Caco-2 (cell line): ENCODE measurements at regions of chr5 and their contacts with region 1.

Region 1: GRCh38 chr5:89407054-89407453 is 524.1 kb upstream of the MEF2C start:
- DNase-seq: no peak
- H3K4me3 ChIP-seq: no peak overlapping the region
- H3K4me3 Mint-ChIP-seq: no peak overlapping the region
- H3K27ac Mint-ChIP-seq: no peak overlapping the region
- H3K4me1 ChIP-seq: no peaks in the 10 kb centered on the region
- H3K4me1 Mint-ChIP-seq: no peaks in the 10 kb centered on the region
- H3K27me3 ChIP-seq: no peaks in the 10 kb centered on the region
- H3K27me3 Mint-ChIP-seq: no peaks in the 10 kb centered on the region
- CTCF ChIP-seq: no peak

Region 2: GRCh38 chr5:89384391-89384790 is 22.7 kb before region 1 on chr5:
- CTCF ChIA-PET with region 1: no interaction called
- POLR2A ChIA-PET with region 1: no interaction called
- intact Hi-C with region 1: loop called (anchors 1 kb)
- DNase-seq: no peak
- H3K4me3 ChIP-seq: no peak overlapping the region
- H3K4me3 Mint-ChIP-seq: no peak overlapping the region
- H3K27ac Mint-ChIP-seq: no peak overlapping the region
- H3K4me1 ChIP-seq: no peaks in the 10 kb centered on the region
- H3K4me1 Mint-ChIP-seq: no peaks in the 10 kb centered on the region
- H3K27me3 ChIP-seq: no peaks in the 10 kb centered on the region
- H3K27me3 Mint-ChIP-seq: peaks cover 2% of the 10 kb centered on the region
- CTCF ChIP-seq: no peak